Activated naive CD4-positive, alpha-beta T cell treated with anti-CD3 and anti-CD28 coated beads, Interleukin-2, amount 10 ng/mL, durations not matched to agents 7 days and 5 days (primary cell): ENCODE measurements at regions of chr11 and their contacts with region 1.

Region 1: DNA sequence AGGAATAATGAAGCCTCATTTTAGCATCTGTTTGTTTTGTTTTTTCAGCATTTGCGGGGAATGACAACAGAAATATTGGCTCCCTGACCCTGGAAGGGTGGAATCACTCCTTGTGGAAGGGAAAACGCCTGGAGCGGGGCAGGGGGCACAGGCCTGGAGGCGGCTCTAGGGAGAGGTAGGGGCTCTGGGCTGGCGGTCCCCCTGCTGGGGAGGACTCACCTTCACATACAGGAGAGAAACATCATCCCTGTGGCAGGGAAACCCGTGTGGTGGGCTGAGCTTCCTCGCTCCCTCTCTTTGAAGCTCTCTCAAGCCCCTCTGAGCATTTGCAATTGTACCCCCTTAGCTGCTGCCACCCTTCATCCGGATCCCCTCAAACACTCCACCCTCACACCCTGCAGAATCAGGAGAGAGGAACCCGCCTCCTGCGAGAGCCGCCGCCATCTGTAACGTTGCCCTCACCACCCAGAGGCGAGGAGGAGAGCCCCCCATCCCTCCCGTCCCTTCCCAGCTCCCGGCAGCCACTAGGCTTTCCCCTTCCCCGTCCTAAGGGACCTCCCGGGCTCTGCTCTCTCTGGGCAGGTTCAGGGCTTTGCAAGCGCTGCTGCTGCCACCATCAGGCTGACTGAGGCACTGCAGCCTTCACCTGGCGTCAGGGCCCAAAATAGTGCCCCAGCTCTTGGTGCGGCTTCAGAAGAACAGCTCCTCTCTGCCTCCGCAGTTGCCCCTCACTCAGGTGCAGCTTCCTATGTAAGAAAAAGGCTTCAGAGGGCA is 10.4 kb downstream of the KIRREL3 start:
- DNase-seq: peak; percentile 69
- H3K4me3 Mint-ChIP-seq: no peak overlapping the region
- H3K27ac Mint-ChIP-seq: no peak overlapping the region
- H3K4me1 Mint-ChIP-seq: no peaks in the 10 kb centered on the region
- H3K27me3 Mint-ChIP-seq: peaks cover 5% of the 10 kb centered on the region

Region 2: DNA sequence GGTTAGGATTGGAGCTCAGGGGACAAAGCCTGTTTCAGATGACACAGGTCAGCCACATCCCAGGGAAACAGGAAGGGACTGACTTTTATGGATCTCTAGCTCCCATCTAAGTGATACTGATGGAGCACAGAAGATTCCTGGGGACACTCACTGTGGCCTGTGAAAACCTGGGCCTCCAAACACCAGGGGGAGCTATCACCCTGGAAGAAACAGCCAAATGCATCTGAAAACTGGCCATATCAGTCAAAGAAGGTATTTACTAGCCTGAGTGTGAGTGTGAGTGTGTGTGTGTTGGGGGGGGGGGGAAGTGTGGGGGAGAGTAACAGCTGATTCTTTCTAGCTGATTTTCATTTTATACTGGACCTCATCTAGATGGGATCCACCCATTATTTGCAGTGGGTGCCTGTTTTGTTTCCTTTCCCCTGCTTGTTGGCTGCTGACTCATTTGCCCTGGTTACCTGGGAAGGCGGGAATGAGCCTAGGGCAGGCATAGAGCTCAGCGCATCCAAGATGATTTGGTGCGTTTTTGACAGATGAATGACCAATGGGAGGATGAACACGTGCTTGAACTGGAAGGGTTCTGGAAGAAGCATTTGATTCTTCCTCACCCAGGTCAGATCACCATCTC is 273.6 kb before region 1 on chr11:
- CTCF ChIA-PET with region 1: interaction called, 11 read pairs
- DNase-seq: peak; percentile 42
- H3K4me3 Mint-ChIP-seq: no peak overlapping the region
- H3K27ac Mint-ChIP-seq: no peak overlapping the region
- H3K4me1 Mint-ChIP-seq: no peaks in the 10 kb centered on the region
- H3K27me3 Mint-ChIP-seq: peaks cover 14% of the 10 kb centered on the region